ENCODE measurements at regions of chr20 and their contacts with region 1.

Region 1: DNA sequence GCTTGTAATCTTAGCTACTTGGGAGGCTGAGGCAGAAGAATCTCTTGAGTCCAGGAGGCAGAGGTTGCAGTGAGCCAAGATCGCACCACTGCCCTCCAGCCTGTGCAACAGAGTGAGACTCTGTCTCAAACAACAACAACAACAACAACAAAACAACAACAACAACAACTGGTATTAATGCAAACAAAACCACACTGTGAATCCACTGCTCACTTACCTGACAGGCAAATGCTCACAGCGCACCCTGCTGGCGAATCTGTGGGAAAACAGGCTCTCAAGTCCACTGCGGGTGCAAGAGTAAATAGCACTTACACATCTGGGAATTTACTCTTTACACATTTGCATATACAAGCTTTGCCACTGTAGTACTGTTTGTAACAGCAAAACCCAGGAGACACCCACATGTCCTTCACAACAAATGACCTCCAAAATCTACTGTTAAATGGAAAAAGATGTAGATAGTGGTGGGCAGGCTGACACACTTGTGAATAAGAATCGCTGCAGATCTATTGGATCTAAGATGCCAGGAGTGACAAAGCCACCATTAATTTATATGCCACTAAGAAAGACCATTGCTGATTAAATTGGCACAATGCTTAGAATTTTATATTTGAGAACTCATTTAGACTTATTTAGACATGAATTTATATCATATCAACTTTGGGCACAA is 29.3 kb downstream of the NSFL1C start:
- DNase-seq: peak; percentile 38
- H3K4me3 ChIP-seq: no peak overlapping the region
- CTCF ChIP-seq: peak; percentile 84

Region 2: DNA sequence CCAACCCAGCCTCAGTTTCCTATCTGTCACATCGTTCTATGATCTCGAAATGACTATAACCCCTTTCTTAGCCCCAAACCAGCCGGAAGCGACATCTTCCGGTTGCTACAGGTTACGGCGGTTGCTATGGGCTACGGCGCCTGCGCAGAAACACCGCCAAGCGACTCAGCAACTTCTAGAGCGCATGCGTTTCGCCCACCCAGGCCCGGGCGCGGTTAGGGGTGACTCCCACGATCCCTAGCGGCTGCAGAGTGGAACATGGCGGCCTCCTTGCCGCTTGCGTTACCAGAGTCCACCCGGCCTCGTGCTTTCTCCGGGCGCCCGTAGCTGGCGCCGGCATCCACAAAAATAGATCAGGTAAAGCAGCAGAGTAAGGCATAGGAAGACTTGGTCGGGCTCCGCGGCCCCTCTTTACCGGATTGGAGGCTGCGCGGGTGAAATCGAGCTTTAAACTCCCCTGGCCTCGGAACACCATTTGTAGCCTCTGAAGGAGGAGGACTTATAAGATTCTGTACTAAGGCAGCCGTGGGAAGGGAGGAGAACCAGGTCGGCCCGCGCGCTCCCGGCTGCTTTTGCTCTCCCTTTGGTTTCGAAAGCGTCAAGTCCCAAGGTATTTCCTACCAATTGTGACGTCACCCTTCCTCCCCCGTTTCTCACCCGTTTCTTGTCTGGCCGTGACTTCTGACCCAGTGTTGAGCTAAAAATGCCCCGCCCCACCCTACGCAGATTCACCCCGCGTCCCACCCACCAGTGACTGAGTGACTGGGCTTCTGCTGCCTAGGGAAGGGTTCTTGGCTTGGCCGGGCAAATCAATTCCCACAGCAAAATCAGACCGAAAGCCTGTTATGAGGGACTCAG is 112.0 kb before region 1 on chr20:
- CTCF ChIA-PET with region 1: interaction called, 51 read pairs
- POLR2A ChIA-PET with region 1: interaction called, 6 read pairs
- DNase-seq: peak; percentile 68
- H3K4me3 ChIP-seq: peak overlapping the region; percentile 90
- CTCF ChIP-seq: peak; percentile 39

Region 3: DNA sequence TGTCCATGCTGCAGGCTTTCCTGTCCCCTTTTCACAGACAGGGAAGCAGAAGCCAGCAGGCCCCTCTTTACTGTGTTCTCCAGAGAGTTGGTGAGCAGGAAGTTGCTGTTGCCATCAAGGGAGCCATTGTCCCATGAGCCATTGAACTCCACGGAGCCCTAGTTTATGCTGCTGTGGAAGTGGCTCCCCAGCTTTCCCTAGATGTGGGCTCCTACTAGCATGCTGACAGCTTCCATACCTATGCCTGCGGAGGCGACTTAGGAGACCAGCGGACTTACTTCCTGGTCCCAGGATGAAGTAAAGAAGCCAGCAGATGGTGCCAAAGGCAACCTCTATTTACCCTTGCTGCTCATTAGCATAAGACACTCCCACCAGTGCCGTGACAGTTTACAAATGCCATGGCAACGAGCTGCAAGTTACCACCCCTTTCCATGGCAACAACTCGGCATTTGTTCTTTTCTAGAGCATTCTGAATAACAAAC is 13.7 kb before region 1 on chr20:
- CTCF ChIA-PET with region 1: interaction called, 104 read pairs
- POLR2A ChIA-PET with region 1: no interaction called
- DNase-seq: no peak
- H3K4me3 ChIP-seq: no peak overlapping the region
- CTCF ChIP-seq: no peak

Region 4: DNA sequence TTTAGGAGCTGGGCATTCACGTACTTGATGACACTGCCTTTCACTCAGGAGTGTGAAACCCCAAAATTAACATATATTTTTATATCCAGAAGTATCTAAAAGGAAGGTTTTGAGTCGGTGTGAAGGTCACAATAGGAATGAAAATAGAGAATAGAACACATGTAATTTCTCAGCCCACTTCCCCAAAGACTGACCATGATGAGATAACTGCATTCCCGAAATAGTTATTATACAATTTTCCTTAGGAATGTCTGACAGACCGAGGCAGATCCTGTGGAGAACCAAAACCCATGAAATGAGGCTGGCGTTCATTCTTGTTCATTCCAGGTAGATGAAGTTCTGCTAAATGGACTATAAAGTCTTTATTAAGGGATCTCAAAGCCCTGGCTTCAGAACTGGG is 18.9 kb after region 1 on chr20:
- CTCF ChIA-PET with region 1: interaction called, 178 read pairs
- POLR2A ChIA-PET with region 1: no interaction called
- DNase-seq: no peak
- H3K4me3 ChIP-seq: no peak overlapping the region
- CTCF ChIP-seq: no peak

Measured in AG04449 (cell line).